Mammary epithelial cell (primary cell): ENCODE measurements at regions of chr16 and their contacts with region 1.

Region 1: DNA sequence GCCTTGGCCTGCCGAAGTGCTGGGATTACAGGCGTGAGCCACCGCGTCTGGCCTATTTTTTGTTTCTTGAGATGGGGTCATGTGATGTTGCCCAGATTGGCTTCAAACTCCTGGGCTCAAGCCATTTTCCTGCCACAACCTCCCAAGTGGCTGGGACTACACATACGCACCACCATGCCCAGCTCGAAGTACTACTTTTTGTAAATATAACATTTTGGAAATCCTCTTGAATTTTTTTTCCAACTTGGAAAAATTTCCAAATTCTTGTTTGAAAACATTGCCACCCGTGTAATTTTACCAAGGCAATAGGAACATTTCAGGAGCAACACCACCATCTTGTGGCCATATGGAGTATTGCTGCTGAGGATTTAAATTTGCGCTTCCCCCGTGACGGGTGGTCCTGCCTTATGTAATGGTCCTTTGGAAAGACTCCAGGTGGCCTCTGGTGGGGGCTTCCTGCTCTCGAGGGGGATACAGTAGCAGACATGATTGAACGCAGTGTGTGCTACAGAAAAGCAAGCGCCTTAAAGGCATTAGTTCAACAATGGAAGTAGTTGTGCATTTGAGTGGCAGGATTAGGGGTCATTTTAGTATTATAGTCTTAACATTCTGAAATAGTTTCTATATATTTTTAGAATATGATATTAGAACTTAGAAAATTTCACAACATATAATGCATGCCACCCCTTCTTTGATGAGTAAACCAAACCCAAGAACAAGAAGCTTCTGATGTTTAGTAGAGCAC is 8.0 kb downstream of the FLYWCH1 start:
- DNase-seq: peak; percentile 47
- H3K4me3 ChIP-seq: no peak overlapping the region
- H3K27ac ChIP-seq: peak overlapping the region; percentile 29
- H3K4me1 ChIP-seq: peaks cover 21% of the 10 kb centered on the region
- H3K27me3 ChIP-seq: no peaks in the 10 kb centered on the region
- CTCF ChIP-seq: peak; percentile 77 to 80

Region 2: GRCh38 chr16:2720719-2721633 is 198.7 kb before region 1 on chr16:
- CTCF ChIA-PET with region 1: no interaction called
- dilution Hi-C with region 1: loop called (anchors 5 kb)
- in situ Hi-C with region 1: no loop called
- intact Hi-C with region 1: no loop called
- DNase-seq: peak; percentile 72
- H3K4me3 ChIP-seq: peak overlapping the region; percentile 58 to 67 (median 63)
- H3K27ac ChIP-seq: no peak overlapping the region
- H3K4me1 ChIP-seq: peaks cover 10% of the 10 kb centered on the region
- H3K27me3 ChIP-seq: no peaks in the 10 kb centered on the region
- CTCF ChIP-seq: peak; percentile 30 to 53

Region 3: DNA sequence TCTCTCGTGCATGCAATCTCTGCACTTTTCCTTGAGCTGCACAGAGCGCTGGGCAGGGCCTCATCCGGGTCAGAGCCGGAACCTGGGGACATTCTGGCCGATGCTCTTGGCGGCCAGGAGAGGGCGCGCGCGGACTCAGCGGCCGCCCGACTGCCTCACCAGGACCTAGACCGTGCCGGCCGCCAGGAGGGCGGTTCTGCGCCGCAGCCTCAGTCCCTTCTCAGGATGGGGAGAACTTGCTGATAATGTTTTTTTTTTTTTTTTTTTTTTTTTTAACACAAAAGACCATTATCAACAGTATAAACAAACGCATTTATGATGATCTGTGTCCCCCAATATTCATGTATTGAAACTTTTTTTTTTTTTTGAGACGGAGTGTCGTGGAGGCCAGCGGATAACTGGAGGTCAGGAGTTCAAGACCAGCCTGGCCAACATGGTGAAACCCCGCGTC is 44.7 kb before region 1 on chr16:
- CTCF ChIA-PET with region 1: no interaction called
- dilution Hi-C with region 1: no loop called
- in situ Hi-C with region 1: loop called (anchors 5 kb)
- intact Hi-C with region 1: loop called (anchors 1 kb)
- DNase-seq: peak; percentile 55
- H3K4me3 ChIP-seq: no peak overlapping the region
- H3K27ac ChIP-seq: no peak overlapping the region
- H3K4me1 ChIP-seq: no peaks in the 10 kb centered on the region
- H3K27me3 ChIP-seq: no peaks in the 10 kb centered on the region
- CTCF ChIP-seq: peak; percentile 89 to 90

Region 4: GRCh38 chr16:2883027-2883851 is 36.4 kb before region 1 on chr16 and contains the start of gene FLYWCH2:
- CTCF ChIA-PET with region 1: no interaction called
- dilution Hi-C with region 1: no loop called
- in situ Hi-C with region 1: loop called (anchors 5 kb)
- intact Hi-C with region 1: loop called (anchors 2 kb)
- DNase-seq: peak; percentile 96
- H3K4me3 ChIP-seq: peak within 1 kb of the TSS; percentile 66 to 93 (median 70)
- H3K27ac ChIP-seq: peak within 1 kb of the TSS; percentile 56
- H3K4me1 ChIP-seq: peaks cover 8% of the 10 kb centered on the region
- H3K27me3 ChIP-seq: no peaks in the 10 kb centered on the region
- CTCF ChIP-seq: no peak
- total RNA-seq, gene FLYWCH2: 20.2 to 38.3 TPM

Region 5: GRCh38 chr16:2905431-2906387 is 14.0 kb before region 1 on chr16:
- CTCF ChIA-PET with region 1: interaction called, 3 read pairs
- dilution Hi-C with region 1: no loop called
- in situ Hi-C with region 1: no loop called
- intact Hi-C with region 1: loop called (anchors 1 kb)
- DNase-seq: peak; percentile 99
- H3K4me3 ChIP-seq: peak overlapping the region; percentile 82 to 94 (median 94)
- H3K27ac ChIP-seq: no peak overlapping the region
- H3K4me1 ChIP-seq: peaks cover 14% of the 10 kb centered on the region
- H3K27me3 ChIP-seq: no peaks in the 10 kb centered on the region
- CTCF ChIP-seq: no peak

Region 6: GRCh38 chr16:2969545-2970521 is 50.1 kb after region 1 on chr16:
- CTCF ChIA-PET with region 1: no interaction called
- dilution Hi-C with region 1: loop called (anchors 5 kb)
- in situ Hi-C with region 1: no loop called
- intact Hi-C with region 1: no loop called
- DNase-seq: peak; percentile 73
- H3K4me3 ChIP-seq: peak overlapping the region; percentile 63 to 88 (median 72)
- H3K27ac ChIP-seq: peak overlapping the region; percentile 45
- H3K4me1 ChIP-seq: peaks cover 36% of the 10 kb centered on the region
- H3K27me3 ChIP-seq: no peaks in the 10 kb centered on the region
- CTCF ChIP-seq: peak; percentile 20 to 68

Region 7: GRCh38 chr16:3807425-3808123 is 887.9 kb after region 1 on chr16:
- CTCF ChIA-PET with region 1: no interaction called
- dilution Hi-C with region 1: no loop called
- in situ Hi-C with region 1: no loop called
- intact Hi-C with region 1: no loop called
- DNase-seq: no peak
- H3K4me3 ChIP-seq: no peak overlapping the region
- H3K27ac ChIP-seq: no peak overlapping the region
- H3K4me1 ChIP-seq: no peaks in the 10 kb centered on the region
- H3K27me3 ChIP-seq: no peaks in the 10 kb centered on the region
- CTCF ChIP-seq: no peak